Activated CD8-positive, alpha-beta T cell treated with anti-CD3 and anti-CD28 coated beads for 36 hours (primary cell): ENCODE measurements at regions of chr17 and their contacts with region 1.

Region 1: GRCh38 chr17:27824745-27825144 is 24.4 kb upstream of the NOS2 start:
- DNase-seq: no peak
- ATAC-seq: no peak
- H3K4me3 Mint-ChIP-seq: no peak overlapping the region
- H3K27ac Mint-ChIP-seq: no peak overlapping the region
- H3K4me1 Mint-ChIP-seq: no peaks in the 10 kb centered on the region
- H3K27me3 Mint-ChIP-seq: peaks cover 10% of the 10 kb centered on the region
- CTCF ChIP-seq: no peak

Region 2: DNA sequence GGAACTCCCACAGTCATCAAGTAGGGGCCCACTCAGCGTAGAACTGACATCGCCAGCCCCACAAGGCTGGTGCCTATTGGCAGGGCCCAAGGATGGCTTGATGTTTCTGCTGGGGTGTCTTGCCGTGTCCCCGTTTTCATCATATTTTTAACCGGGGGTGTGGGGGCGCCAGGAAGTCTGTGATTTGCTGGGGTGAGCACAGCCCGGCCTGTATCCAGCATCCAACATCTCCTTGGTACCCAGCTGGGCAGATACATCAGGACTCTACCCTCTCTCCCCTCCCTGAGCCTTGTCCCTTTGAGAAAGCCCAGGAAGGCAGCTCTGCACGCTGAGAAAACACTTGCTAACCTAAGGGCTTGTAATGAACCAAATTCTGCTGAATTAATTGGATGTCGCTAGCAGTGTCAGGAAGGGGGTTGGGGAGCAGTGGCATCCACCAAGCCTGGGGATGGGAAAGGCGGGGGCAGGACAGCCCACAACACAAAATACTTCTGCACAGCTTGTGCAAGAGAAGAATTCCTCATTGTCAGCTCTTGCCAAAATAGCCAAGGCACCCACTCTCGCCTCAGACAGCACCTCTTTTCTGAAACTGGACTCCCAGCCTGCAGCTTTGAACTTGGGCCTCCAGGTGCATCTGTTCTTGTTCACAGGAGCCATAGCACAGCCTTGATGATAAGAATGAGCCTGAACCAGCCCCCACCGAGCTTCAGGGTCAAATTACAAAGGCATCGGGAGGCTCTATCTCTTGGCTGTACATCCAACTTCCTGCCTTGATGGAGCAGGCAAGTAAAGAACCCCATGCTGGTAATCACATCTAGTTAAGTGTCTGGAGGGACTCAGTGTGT is 132.1 kb after region 1 on chr17:
- CTCF ChIA-PET with region 1: no interaction called
- POLR2A ChIA-PET with region 1: no interaction called
- intact Hi-C with region 1: loop called (anchors 10 kb)
- DNase-seq: no peak
- ATAC-seq: no peak
- H3K4me3 Mint-ChIP-seq: no peak overlapping the region
- H3K27ac Mint-ChIP-seq: no peak overlapping the region
- H3K4me1 Mint-ChIP-seq: no peaks in the 10 kb centered on the region
- H3K27me3 Mint-ChIP-seq: peaks cover 3% of the 10 kb centered on the region
- CTCF ChIP-seq: no peak

Region 3: GRCh38 chr17:28133562-28133970 is 308.8 kb after region 1 on chr17:
- CTCF ChIA-PET with region 1: no interaction called
- POLR2A ChIA-PET with region 1: no interaction called
- intact Hi-C with region 1: no loop called
- DNase-seq: no peak
- ATAC-seq: peak; percentile 55
- H3K4me3 Mint-ChIP-seq: no peak overlapping the region
- H3K27ac Mint-ChIP-seq: no peak overlapping the region
- H3K4me1 Mint-ChIP-seq: peaks cover 9% of the 10 kb centered on the region
- H3K27me3 Mint-ChIP-seq: no peaks in the 10 kb centered on the region
- CTCF ChIP-seq: no peak